Activated B cell treated with CpG ODN at 0.5 μM for 24 hours (primary cell): ENCODE measurements at regions of chr3 and their contacts with region 1.

Region 1: DNA sequence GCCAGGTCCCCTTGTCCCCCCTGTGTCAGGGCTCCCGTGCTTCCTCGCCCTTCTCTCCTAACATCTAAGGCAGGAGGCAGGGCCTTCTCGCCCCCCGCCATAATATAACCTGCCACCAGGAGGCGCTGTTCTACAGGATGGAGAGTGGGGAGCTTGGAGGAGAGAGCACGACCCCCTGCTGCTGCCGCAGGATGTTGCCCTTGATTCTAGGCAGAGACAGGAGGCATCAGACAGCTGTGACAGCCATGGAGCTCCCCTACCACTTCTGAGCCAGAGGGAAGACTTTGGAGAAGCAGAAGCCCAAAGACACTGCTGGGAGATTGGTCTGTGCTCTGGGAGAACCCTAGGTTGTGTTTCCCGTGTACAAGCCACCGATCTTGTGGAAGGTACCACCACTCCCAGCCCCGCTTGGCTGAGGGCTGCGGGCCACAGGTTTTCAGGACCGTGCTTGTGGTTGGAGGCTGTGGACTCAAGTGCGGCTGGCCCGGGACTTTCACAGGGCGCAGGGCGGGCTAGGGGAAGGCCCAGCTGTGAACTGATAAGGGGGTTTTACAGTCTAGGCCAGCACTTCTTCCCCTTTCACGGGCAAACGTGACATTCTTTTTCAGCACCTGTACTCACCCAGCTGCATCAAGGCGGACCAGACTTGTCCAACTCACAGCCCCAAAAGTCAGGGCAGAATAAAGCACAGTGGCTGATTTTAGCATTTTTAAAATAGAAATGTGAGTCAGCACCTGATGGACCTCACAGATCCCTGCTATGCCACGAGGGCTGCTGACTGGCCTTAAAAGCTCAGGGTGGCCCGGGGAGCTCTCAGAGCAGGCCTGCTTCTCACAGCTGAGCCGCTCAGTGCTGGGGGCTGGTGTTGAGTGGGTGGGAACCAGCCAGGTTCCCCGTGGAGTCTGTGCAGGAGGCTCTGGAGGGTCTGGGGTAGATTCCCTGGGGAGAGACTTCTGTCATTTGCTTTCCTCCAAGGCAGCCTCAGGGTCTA is 2.6 kb upstream of the TIGIT start:
- DNase-seq: peak; percentile 88
- ATAC-seq: peak; percentile 85
- H3K4me3 Mint-ChIP-seq: peak overlapping the region; percentile 71
- H3K27ac Mint-ChIP-seq: peak overlapping the region; percentile 98
- H3K4me1 Mint-ChIP-seq: peaks cover 47% of the 10 kb centered on the region
- H3K27me3 Mint-ChIP-seq: no peaks in the 10 kb centered on the region
- CTCF ChIP-seq: peak; percentile 83

Region 2: DNA sequence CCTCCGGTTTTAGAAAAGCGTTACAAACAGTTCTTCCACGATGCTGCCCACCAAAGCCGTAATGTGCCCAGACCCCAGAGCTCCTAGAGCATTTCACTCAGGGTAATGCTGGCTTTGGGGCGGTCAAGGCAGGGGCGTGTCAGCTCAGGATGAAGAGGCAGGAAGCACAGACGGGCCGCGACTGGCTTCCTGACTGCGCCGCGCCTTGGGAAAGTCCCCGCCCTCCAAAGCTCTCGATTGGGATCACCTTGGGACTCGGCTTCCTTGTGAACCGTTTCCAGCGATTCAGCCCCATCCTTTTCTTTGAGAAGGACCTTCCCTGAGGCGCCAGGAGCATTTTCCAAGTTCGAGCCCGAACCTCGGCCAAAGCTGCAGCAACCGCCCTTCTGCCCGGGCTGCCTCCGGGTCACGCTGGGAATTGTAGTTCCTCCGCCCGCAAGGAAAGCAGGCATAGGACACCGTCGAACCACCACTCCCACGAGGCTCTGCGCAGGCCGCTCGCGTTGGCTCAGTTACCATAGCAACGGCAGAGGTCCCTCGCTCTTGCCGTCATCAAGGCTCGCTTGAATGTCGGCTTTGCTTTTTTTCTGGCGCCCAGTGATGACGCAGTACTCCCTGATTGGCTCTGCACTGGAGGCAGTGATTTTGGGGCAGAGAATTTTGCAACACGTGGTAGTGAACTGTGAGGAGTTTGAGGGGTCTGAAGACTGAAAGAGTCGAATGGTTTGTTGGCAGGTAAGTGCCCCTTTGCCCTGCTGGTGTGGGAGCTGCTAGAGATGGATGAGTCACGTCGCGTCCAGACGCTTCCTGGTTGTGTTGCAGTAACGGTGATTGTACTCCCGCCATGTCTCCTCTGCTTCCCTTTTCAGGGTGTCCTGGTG is 234.8 kb before region 1 on chr3 and contains the starts of genes CCDC191 and QTRT2:
- CTCF ChIA-PET with region 1: no interaction called
- POLR2A ChIA-PET with region 1: interaction called, 4 read pairs
- intact Hi-C with region 1: loop called (anchors 1 kb)
- DNase-seq: peak; percentile 89
- ATAC-seq: peak; percentile 95
- H3K4me3 Mint-ChIP-seq: peak within 1 kb of the TSS; percentile 99
- H3K27ac Mint-ChIP-seq: peak within 1 kb of the TSS; percentile 99
- H3K4me1 Mint-ChIP-seq: peaks cover 55% of the 10 kb centered on the region
- H3K27me3 Mint-ChIP-seq: peaks cover 3% of the 10 kb centered on the region
- CTCF ChIP-seq: no peak
- total RNA-seq, gene CCDC191: 14.7 and 17.2 TPM in 2 replicates
- total RNA-seq, gene QTRT2: 63.1 and 75.5 TPM in 2 replicates

Region 3: GRCh38 chr3:114078126-114078525 is 213.1 kb before region 1 on chr3:
- CTCF ChIA-PET with region 1: no interaction called
- POLR2A ChIA-PET with region 1: no interaction called
- intact Hi-C with region 1: no loop called
- DNase-seq: no peak
- ATAC-seq: no peak
- H3K4me3 Mint-ChIP-seq: no peak overlapping the region
- H3K27ac Mint-ChIP-seq: no peak overlapping the region
- H3K4me1 Mint-ChIP-seq: no peaks in the 10 kb centered on the region
- H3K27me3 Mint-ChIP-seq: no peaks in the 10 kb centered on the region
- CTCF ChIP-seq: no peak

Region 4: DNA sequence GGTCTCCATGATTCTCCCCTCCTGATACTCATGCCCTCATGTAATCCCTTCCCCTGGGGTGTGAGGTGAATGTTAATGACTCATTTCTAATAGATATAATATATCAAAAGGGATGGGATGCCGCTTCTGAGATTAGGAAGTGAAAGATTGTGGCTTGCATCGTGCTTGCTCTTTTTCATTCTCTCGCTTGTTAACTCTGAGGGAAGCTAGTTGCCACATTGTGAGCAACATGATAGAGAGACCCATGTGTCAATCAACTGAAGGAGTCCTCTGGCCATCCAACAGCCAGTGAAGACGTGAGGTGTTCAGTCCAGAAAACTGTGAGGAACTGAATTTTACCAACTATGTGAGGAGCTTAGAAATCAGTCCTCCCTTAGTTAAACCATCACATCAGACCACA is 83.4 kb before region 1 on chr3:
- CTCF ChIA-PET with region 1: interaction called, 66 read pairs
- POLR2A ChIA-PET with region 1: interaction called, 334 read pairs
- intact Hi-C with region 1: no loop called
- DNase-seq: no peak
- ATAC-seq: peak; percentile 97
- H3K4me3 Mint-ChIP-seq: peak overlapping the region; percentile 20
- H3K27ac Mint-ChIP-seq: peak overlapping the region; percentile 74
- H3K4me1 Mint-ChIP-seq: peaks cover 38% of the 10 kb centered on the region
- H3K27me3 Mint-ChIP-seq: no peaks in the 10 kb centered on the region
- CTCF ChIP-seq: no peak

Region 5: GRCh38 chr3:114252954-114253353 is 38.3 kb before region 1 on chr3:
- CTCF ChIA-PET with region 1: no interaction called
- POLR2A ChIA-PET with region 1: no interaction called
- intact Hi-C with region 1: no loop called
- DNase-seq: no peak
- ATAC-seq: no peak
- H3K4me3 Mint-ChIP-seq: no peak overlapping the region
- H3K27ac Mint-ChIP-seq: no peak overlapping the region
- H3K4me1 Mint-ChIP-seq: no peaks in the 10 kb centered on the region
- H3K27me3 Mint-ChIP-seq: no peaks in the 10 kb centered on the region
- CTCF ChIP-seq: no peak

Region 6: DNA sequence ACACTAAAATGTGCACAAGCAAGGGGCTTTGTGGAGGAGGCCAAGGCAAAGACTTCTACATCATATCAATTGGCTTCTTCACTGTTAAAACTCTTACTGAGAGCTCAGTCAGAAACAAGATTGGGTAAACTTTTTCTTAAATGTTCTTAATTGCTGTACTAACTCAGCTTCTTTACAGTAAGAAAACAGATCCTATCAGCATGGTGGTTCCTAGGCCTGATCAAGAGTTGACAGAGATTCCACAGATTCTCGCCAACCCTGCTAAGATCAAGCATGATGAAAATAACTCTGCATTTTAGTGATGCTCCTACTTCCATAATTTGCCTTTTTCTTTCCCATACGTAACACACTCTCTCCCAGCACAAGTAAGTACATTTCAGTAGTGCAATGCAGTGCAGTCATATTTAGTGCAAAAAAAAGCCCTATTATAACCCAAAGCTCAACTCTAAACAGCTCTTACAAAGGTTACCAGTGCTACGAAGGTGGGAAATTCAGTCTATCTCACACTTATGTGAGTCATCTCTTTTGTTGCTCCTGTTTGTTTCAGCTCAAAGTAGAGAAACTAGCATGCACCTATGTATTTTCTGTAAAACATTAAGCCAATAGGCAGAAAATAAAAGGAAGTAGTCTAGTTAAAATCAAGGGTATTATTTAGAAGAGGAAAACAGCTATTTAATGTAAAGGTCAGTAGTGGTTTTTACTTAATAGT is 32.5 kb after region 1 on chr3:
- CTCF ChIA-PET with region 1: interaction called, 18 read pairs
- POLR2A ChIA-PET with region 1: interaction called, 15 read pairs
- intact Hi-C with region 1: no loop called
- DNase-seq: no peak
- ATAC-seq: no peak
- H3K4me3 Mint-ChIP-seq: no peak overlapping the region
- H3K27ac Mint-ChIP-seq: peak overlapping the region; percentile 7
- H3K4me1 Mint-ChIP-seq: peaks cover 50% of the 10 kb centered on the region
- H3K27me3 Mint-ChIP-seq: no peaks in the 10 kb centered on the region
- CTCF ChIP-seq: no peak

Region 7: DNA sequence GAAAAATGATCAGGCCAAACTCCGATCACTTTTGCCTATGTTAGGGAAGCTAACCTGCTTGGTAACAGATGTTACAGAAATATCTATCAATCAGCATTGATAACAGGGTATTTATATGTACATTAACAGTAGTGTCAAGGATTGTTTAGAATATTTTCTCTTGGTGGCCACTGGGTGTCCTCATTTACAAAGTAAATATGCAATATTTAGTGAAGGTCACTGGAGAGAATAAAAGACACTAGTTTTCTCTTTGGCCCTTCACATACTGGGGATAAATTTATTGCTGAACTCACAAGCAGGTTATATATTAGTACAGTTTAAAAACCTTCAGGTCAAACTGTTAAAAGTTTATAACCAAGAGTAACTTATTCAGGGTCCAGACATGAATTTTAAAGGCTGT is 71.6 kb after region 1 on chr3:
- CTCF ChIA-PET with region 1: interaction called, 8 read pairs
- POLR2A ChIA-PET with region 1: interaction called, 5 read pairs
- intact Hi-C with region 1: loop called (anchors 2 kb)
- DNase-seq: no peak
- ATAC-seq: peak; percentile 34
- H3K4me3 Mint-ChIP-seq: no peak overlapping the region
- H3K27ac Mint-ChIP-seq: no peak overlapping the region
- H3K4me1 Mint-ChIP-seq: peaks cover 4% of the 10 kb centered on the region
- H3K27me3 Mint-ChIP-seq: no peaks in the 10 kb centered on the region
- CTCF ChIP-seq: no peak

Region 8: GRCh38 chr3:114454551-114455251 is 163.5 kb after region 1 on chr3:
- CTCF ChIA-PET with region 1: interaction called, 5 read pairs
- POLR2A ChIA-PET with region 1: interaction called, 7 read pairs
- intact Hi-C with region 1: loop called (anchors 1 kb)
- DNase-seq: no peak
- ATAC-seq: peak; percentile 43
- H3K4me3 Mint-ChIP-seq: no peak overlapping the region
- H3K27ac Mint-ChIP-seq: no peak overlapping the region
- H3K4me1 Mint-ChIP-seq: peaks cover 52% of the 10 kb centered on the region
- H3K27me3 Mint-ChIP-seq: no peaks in the 10 kb centered on the region
- CTCF ChIP-seq: no peak

Region 9: DNA sequence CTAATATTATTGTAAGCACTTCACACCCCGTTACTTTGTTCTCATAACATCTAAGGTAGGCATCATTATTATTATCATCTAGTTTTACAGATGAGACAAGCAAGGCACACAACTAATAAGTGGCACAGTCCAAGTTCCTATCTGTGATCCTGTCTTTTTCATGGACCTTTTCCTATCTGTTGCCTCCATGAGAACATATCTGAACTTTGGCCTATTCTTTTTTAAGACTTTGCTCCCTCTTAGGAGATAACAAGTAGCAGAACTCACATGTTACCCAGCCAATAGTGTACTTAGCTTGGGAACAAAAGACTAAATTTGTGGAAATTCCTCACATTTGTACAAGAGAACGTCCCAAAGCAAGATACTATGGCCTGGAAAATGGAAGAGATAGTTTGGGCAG is 175.0 kb after region 1 on chr3:
- CTCF ChIA-PET with region 1: no interaction called
- POLR2A ChIA-PET with region 1: no interaction called
- intact Hi-C with region 1: no loop called
- DNase-seq: no peak
- ATAC-seq: no peak
- H3K4me3 Mint-ChIP-seq: no peak overlapping the region
- H3K27ac Mint-ChIP-seq: no peak overlapping the region
- H3K4me1 Mint-ChIP-seq: peaks cover 24% of the 10 kb centered on the region
- H3K27me3 Mint-ChIP-seq: no peaks in the 10 kb centered on the region
- CTCF ChIP-seq: no peak